ENCODE measurements at regions of chr19 and their contacts with region 1.

Region 1: DNA sequence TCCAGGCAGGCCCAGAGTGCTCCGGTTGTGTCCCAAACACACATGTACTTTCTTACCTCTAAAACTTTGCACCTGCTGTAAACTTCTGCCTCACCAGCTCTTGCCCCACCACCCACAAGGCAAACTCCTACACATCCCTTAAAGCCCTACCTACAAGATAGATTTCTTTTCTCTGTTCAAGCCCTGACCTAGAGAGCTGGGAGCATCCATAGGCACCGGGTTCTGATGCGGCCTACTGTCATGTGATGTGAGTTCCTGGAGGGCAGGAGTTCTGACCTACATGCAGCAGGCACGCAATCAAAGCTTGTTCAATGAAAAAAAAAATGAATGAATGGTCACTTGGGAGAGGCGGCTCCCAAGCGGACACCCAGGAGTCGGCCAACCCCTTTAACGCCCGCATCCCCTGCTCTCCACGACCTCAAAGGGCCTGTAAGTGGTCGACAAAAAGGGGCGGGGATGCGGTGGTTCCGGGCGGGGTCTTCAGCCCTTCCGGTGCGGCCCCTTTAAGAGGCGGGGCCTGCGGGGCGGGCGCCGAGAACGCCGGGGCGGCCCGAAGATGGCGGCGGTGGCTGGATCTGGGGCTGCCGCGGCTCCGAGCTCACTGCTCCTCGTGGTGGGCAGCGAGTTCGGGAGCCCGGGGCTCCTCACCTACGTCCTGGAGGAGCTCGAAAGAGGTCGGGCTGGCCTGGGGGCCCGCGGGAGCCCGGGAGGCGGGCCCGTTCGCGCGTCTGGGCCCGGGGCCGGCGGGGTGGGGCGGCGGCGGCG is at the start of gene MAP1S:
- DNase-seq: peak in 9 of 10 donors; percentile 36 to 85 (median 55)
- H3K4me3 ChIP-seq: peak within 1 kb of the TSS; percentile 67 to 98 (median 92)
- H3K27ac ChIP-seq: peak within 1 kb of the TSS in 57 of 59 donors; percentile 21 to 91 (median 76)
- H3K27me3 ChIP-seq: no peaks in the 10 kb centered on the region
- CTCF ChIP-seq: peak in 7 of 56 donors; percentile 11 to 34 (median 23)
- total RNA-seq, gene MAP1S: 88.0 to 219 (median 156) TPM

Region 2: DNA sequence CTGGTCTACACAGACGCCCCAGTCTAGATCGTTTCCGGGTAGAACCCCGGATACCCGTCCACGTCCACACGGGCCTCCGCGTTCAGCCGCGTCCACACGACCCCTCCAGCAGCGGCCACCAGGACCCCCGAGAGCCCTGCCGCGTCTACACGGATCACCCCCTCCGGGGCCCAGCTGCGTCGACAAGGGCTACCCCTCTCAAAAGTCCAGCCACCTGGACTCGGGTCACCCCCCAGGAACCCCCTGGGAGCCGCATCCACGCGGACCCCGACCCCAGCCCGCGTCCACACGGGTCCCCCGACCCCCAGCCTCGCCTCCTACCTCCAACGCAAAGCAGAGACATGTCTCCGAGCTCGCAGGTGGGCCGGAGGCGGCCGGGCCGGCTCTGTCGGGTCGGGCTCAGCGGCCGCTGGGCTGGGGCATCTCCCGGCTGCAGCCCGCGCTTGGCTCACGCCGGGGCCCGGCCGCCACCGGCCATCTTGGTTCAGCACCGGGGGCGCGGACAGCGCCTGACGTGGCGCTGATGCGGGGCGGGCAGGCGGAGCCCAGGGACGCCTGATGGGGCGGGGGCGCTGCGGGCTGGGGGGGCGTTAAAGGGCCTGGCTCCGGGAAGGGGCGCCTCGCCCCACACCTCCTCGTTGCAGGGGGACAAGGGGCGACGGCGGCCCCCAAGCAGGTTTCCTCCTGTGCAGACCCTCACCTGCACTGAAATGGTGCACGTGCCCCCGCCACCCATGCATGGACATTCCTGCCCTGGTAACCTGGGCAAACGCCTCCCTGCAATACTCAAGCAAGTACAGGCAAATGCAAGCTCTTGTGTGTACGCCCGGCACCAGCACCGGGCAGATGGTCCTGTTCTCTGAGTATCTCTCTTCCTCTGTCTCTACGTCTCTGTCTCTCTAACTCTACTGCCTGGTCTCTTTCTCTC is 31.0 kb before region 1 on chr19 and contains the start of gene UNC13A:
- intact Hi-C with region 1: loop called in 1 of 2 experiments (anchors 2 kb)
- DNase-seq: peak in 9 of 10 donors; percentile 43 to 89 (median 75)
- H3K4me3 ChIP-seq: peak within 1 kb of the TSS; percentile 38 to 80 (median 64)
- H3K27ac ChIP-seq: peak within 1 kb of the TSS in 49 of 59 donors; percentile 2 to 88 (median 69)
- H3K27me3 ChIP-seq: peaks cover 0 to 52% (median 4%) of the 10 kb centered on the region in 45 donors
- CTCF ChIP-seq: peak in 2 of 56 donors; percentile 14 to 20
- total RNA-seq, gene UNC13A: 49.4 to 256 (median 166) TPM

Region 3: DNA sequence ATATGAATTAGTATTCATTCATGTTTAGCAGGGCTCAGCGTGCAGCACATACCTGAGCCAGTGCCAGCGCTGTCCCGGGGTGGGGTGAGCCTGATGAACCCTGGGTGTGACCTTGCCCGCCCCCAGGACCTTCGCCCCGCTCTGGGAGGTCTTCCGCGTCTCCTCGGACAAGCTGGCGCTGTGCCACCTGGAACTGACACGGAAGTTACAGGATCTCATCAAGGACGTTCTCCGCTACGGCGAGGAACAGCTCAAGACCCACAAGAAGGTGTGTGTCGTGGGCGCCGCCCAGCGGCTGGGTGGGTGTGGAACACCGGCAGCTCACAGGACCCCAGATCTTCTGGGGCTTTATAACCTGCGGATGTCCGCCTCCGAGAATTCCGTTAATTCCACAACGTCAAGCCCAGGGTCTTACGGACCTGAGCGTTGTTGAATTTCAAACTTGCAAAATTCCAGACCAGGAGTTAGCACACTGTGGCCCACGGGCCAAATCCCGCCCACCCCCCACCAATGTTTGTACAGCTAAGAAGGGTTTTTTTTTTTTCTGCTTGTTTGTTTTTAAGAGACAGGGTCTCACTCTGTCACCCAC is 47.5 kb after region 1 on chr19:
- intact Hi-C with region 1: loop called in 1 of 2 experiments (anchors 5 kb)
- DNase-seq: peak in 9 of 10 donors; percentile 76 to 85 (median 81)
- H3K4me3 ChIP-seq: peak overlapping the region in 19 of 59 donors; percentile 2 to 42 (median 19)
- H3K27ac ChIP-seq: peak overlapping the region in 57 of 59 donors; percentile 16 to 100 (median 78)
- H3K27me3 ChIP-seq: no peaks in the 10 kb centered on the region
- CTCF ChIP-seq: peak; percentile 23 to 88 (median 77)